ENCODE measurements at regions of chr2 and their contacts with region 1.

Region 1: GRCh38 chr2:20661067-20661980 is 5.6 kb upstream of the GDF7 start:
- DNase-seq: peak in 4 of 5 donors; percentile 64 to 69 (median 68)
- H3K4me3 ChIP-seq: no peak overlapping the region
- H3K4me3 Mint-ChIP-seq: peak overlapping the region in 1 of 8 donors; percentile 43
- H3K27ac ChIP-seq: no peak overlapping the region
- H3K27ac Mint-ChIP-seq: peak overlapping the region in 1 of 7 donors; percentile 25
- H3K4me1 ChIP-seq: peaks cover 12% of the 10 kb centered on the region
- H3K4me1 Mint-ChIP-seq: peaks cover 3 to 14% (median 10%) of the 10 kb centered on the region in 4 donors
- H3K27me3 ChIP-seq: peaks cover 26% of the 10 kb centered on the region
- H3K27me3 Mint-ChIP-seq: peaks cover 43 to 49% of the 10 kb centered on the region in 2 donors

Region 2: DNA sequence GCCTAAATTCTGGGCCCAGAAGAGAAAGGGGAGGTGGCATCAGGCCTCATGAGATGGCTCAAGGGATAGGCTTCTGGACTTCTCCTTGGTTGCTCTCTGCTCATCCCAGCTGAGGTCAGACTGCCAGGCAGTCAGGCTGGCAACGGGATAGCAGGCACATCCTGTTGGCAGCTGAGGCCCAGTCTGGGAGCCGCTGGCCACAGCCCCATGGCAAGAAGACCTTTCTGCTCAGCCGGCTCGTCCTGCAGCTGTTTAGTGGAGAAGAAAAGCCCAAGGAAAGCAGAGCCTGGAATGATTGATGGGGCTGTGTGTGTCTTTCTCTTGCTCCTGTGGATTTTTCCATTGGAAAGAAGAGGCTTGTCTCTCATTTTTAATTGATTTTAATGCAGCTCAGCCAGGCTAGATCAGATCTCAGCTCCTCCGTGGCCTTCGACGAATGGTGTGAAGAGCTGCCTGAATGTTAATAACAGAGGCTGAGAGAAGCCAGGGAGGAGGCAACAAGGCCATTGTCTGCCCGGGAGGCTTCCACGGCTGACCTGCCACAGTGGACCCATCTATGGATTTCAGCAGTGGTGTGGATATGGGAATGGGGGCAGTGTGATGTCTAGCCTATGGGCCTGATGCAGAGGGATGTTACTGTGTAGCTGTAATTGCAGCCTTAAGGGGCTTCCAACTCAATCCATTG is 109.9 kb before region 1 on chr2:
- CTCF ChIA-PET with region 1: no interaction called
- POLR2A ChIA-PET with region 1: no interaction called
- intact Hi-C with region 1: no loop called
- DNase-seq: no peak
- H3K4me3 ChIP-seq: no peak overlapping the region
- H3K4me3 Mint-ChIP-seq: no peak overlapping the region
- H3K27ac ChIP-seq: no peak overlapping the region
- H3K27ac Mint-ChIP-seq: peak overlapping the region in 1 of 7 donors; percentile 10
- H3K4me1 ChIP-seq: no peaks in the 10 kb centered on the region
- H3K4me1 Mint-ChIP-seq: no peaks in the 10 kb centered on the region
- H3K27me3 ChIP-seq: no peaks in the 10 kb centered on the region
- H3K27me3 Mint-ChIP-seq: peaks cover 0 to 3% of the 10 kb centered on the region in 2 donors

Region 3: GRCh38 chr2:20642055-20642971 is 19.0 kb before region 1 on chr2:
- CTCF ChIA-PET with region 1: interaction called, 25 read pairs
- POLR2A ChIA-PET with region 1: no interaction called
- intact Hi-C with region 1: no loop called
- DNase-seq: peak; percentile 64 to 73 (median 70)
- H3K4me3 ChIP-seq: no peak overlapping the region
- H3K4me3 Mint-ChIP-seq: no peak overlapping the region
- H3K27ac ChIP-seq: no peak overlapping the region
- H3K27ac Mint-ChIP-seq: no peak overlapping the region
- H3K4me1 ChIP-seq: no peaks in the 10 kb centered on the region
- H3K4me1 Mint-ChIP-seq: peaks cover 5 to 13% (median 7%) of the 10 kb centered on the region in 4 donors
- H3K27me3 ChIP-seq: no peaks in the 10 kb centered on the region
- H3K27me3 Mint-ChIP-seq: no peaks in the 10 kb centered on the region

Region 4: GRCh38 chr2:20675701-20676352 is 14.5 kb after region 1 on chr2:
- CTCF ChIA-PET with region 1: interaction called, 73 read pairs
- POLR2A ChIA-PET with region 1: interaction called, 3 read pairs
- intact Hi-C with region 1: no loop called
- DNase-seq: no peak
- H3K4me3 ChIP-seq: no peak overlapping the region
- H3K4me3 Mint-ChIP-seq: no peak overlapping the region
- H3K27ac ChIP-seq: no peak overlapping the region
- H3K27ac Mint-ChIP-seq: no peak overlapping the region
- H3K4me1 ChIP-seq: no peaks in the 10 kb centered on the region
- H3K4me1 Mint-ChIP-seq: peaks cover 0 to 7% (median 2%) of the 10 kb centered on the region in 4 donors
- H3K27me3 ChIP-seq: peaks cover 12% of the 10 kb centered on the region
- H3K27me3 Mint-ChIP-seq: peaks cover 5 to 17% of the 10 kb centered on the region in 2 donors

Region 5: GRCh38 chr2:20781656-20782265 is 120.4 kb after region 1 on chr2:
- CTCF ChIA-PET with region 1: interaction called, 12 read pairs
- POLR2A ChIA-PET with region 1: no interaction called
- intact Hi-C with region 1: no loop called
- DNase-seq: peak in 3 of 5 donors; percentile 17 to 29 (median 29)
- H3K4me3 ChIP-seq: no peak overlapping the region
- H3K4me3 Mint-ChIP-seq: no peak overlapping the region
- H3K27ac ChIP-seq: no peak overlapping the region
- H3K27ac Mint-ChIP-seq: no peak overlapping the region
- H3K4me1 ChIP-seq: no peaks in the 10 kb centered on the region
- H3K4me1 Mint-ChIP-seq: peaks cover 0 to 7% (median under 1%) of the 10 kb centered on the region in 4 donors
- H3K27me3 ChIP-seq: no peaks in the 10 kb centered on the region
- H3K27me3 Mint-ChIP-seq: no peaks in the 10 kb centered on the region

Region 6: GRCh38 chr2:20970068-20970467 is 308.7 kb after region 1 on chr2:
- CTCF ChIA-PET with region 1: interaction called, 246 read pairs
- POLR2A ChIA-PET with region 1: no interaction called
- intact Hi-C with region 1: no loop called
- DNase-seq: no peak
- H3K4me3 ChIP-seq: no peak overlapping the region
- H3K4me3 Mint-ChIP-seq: no peak overlapping the region
- H3K27ac ChIP-seq: no peak overlapping the region
- H3K27ac Mint-ChIP-seq: no peak overlapping the region
- H3K4me1 ChIP-seq: no peaks in the 10 kb centered on the region
- H3K4me1 Mint-ChIP-seq: no peaks in the 10 kb centered on the region
- H3K27me3 ChIP-seq: peaks cover 3% of the 10 kb centered on the region
- H3K27me3 Mint-ChIP-seq: peaks cover 12 to 22% of the 10 kb centered on the region in 2 donors

Measured in CD4-positive, alpha-beta memory T cell (primary cell).